ENCODE measurements at regions of chr17 and their contacts with region 1.

Region 1: DNA sequence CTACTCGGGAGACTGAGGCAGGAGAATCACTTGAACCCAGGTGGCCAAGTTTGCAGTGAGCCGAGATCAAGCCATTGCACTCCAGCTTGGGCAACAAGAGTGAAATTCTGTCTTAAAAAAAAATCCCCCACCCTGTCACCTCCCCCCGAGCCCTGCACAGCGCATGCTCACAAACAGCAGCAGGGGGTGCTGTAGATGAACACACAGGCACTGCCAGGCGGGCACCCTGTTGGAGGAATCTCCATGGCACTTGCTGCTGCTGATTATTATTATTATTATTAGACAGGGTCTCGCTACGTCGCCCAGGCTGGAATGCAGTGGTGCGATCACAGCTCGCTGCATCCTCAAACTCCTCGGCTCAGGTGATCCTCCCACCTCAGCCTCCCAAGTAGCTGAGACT is 24.6 kb downstream of the FZD2 start:
- DNase-seq: peak; percentile 68
- ATAC-seq: peak; percentile 64 to 85; a peak in 5 of 6 replicates
- H3K4me3 ChIP-seq: no peak overlapping the region
- H3K27ac ChIP-seq: peak overlapping the region in 1 of 2 experiments; percentile 59; a peak in 2 of 6 replicates
- H3K4me1 ChIP-seq: peaks cover 23% of the 10 kb centered on the region
- CTCF ChIP-seq: peak; percentile 44
- EP300 ChIP-seq: no peak
- POLR2A ChIP-seq: no peak
- RAD21 ChIP-seq: peak; percentile 59 to 73

Region 2: DNA sequence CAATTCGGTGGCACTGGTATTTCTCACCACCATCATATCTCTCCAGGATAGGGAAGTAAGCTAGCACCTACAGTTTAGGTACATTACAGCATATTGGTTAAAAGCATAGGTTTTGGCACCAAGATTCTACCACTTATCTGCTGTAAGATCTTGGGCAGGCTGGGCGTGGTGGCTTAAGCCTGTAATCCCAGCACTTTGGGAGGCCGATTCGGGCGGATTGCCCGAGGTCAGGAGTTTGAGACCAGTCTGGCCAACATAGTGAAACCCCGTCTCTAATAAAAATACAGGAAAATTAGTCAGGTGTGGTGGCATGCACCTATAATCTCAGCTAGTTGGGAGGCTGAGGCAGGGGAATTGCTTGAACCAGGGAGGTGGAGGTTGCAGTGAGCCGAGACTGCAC is 130.0 kb before region 1 on chr17:
- CTCF ChIA-PET with region 1: no interaction called
- POLR2A ChIA-PET with region 1: no interaction called
- DNase-seq: no peak
- ATAC-seq: no peak
- H3K4me3 ChIP-seq: no peak overlapping the region
- H3K27ac ChIP-seq: no peak overlapping the region
- H3K4me1 ChIP-seq: no peaks in the 10 kb centered on the region
- CTCF ChIP-seq: no peak
- EP300 ChIP-seq: no peak
- POLR2A ChIP-seq: no peak
- RAD21 ChIP-seq: no peak

Region 3: DNA sequence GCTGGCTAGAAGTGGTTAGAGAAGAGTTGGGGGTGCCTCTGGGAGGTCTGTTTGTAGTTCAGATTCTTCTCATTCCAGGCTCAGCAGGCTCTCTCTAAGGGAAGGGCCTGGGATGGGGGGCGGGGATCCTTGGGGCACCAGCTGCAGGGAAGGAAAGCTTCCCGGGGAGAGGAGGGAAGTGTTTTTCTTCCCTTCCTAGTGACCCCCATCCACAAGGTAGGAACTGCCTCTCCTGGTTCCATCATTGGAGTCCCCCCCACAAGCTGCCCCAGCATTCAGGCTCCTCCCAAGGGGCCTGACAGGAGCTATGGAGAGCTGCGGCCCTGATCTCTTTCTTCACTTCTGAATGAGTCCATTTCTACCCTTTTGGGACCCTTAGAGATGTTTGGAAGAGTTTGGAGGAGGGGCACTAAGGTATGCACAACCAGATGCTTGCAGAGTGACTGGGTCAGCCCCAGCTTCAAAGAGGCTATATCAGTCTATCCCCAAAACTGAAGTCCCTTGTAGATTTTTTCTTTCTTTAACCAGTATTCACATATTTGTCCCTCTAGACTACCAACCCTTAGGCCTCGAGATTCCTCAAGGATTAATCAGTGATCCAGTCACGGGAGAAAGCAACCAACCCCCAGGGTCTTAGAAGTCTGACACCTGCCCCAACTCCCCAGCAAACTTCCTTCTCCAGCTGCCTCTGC is 38.5 kb before region 1 on chr17:
- CTCF ChIA-PET with region 1: interaction called, 14 read pairs
- POLR2A ChIA-PET with region 1: interaction called, 20 read pairs
- DNase-seq: peak; percentile 94 to 98
- ATAC-seq: peak; percentile 80 to 91
- H3K4me3 ChIP-seq: no peak overlapping the region
- H3K27ac ChIP-seq: peak overlapping the region; percentile 93 to 94
- H3K4me1 ChIP-seq: peaks cover 66% of the 10 kb centered on the region
- CTCF ChIP-seq: no peak
- EP300 ChIP-seq: peak; percentile 51 to 81; a peak in 4 of 5 replicates
- POLR2A ChIP-seq: no peak
- RAD21 ChIP-seq: peak; percentile 46 to 47; a peak in 4 of 5 replicates

Region 4: GRCh38 chr17:44565866-44566443 is 15.9 kb before region 1 on chr17:
- CTCF ChIA-PET with region 1: interaction called, 25 read pairs
- POLR2A ChIA-PET with region 1: no interaction called
- DNase-seq: no peak
- ATAC-seq: no peak
- H3K4me3 ChIP-seq: no peak overlapping the region
- H3K27ac ChIP-seq: peak overlapping the region in 1 of 2 experiments; percentile 29; a peak in 1 of 6 replicates
- H3K4me1 ChIP-seq: peaks cover 14% of the 10 kb centered on the region
- CTCF ChIP-seq: peak; percentile 43
- EP300 ChIP-seq: no peak
- POLR2A ChIP-seq: no peak
- RAD21 ChIP-seq: peak in 1 of 2 experiments; percentile 55; a peak in 3 of 5 replicates

Region 5: GRCh38 chr17:44599298-44600175 is 17.7 kb after region 1 on chr17:
- CTCF ChIA-PET with region 1: interaction called, 16 read pairs
- POLR2A ChIA-PET with region 1: interaction called, 10 read pairs
- DNase-seq: peak; percentile 87 to 93
- ATAC-seq: peak; percentile 90 to 95
- H3K4me3 ChIP-seq: no peak overlapping the region
- H3K27ac ChIP-seq: peak overlapping the region; percentile 86 to 88
- H3K4me1 ChIP-seq: peaks cover 50% of the 10 kb centered on the region
- CTCF ChIP-seq: no peak
- EP300 ChIP-seq: no peak
- POLR2A ChIP-seq: no peak
- RAD21 ChIP-seq: peak; percentile 14 to 32; a peak in 4 of 5 replicates

Region 6: GRCh38 chr17:44628243-44629188 is 46.6 kb after region 1 on chr17:
- CTCF ChIA-PET with region 1: interaction called, 52 read pairs
- POLR2A ChIA-PET with region 1: no interaction called
- DNase-seq: no peak
- ATAC-seq: no peak
- H3K4me3 ChIP-seq: no peak overlapping the region
- H3K27ac ChIP-seq: peak overlapping the region in 1 of 2 experiments; percentile 52; a peak in 3 of 6 replicates
- H3K4me1 ChIP-seq: no peaks in the 10 kb centered on the region
- CTCF ChIP-seq: no peak
- EP300 ChIP-seq: no peak
- POLR2A ChIP-seq: no peak
- RAD21 ChIP-seq: no peak

Region 7: GRCh38 chr17:44636562-44636961 is 54.7 kb after region 1 on chr17:
- CTCF ChIA-PET with region 1: interaction called, 52 read pairs
- POLR2A ChIA-PET with region 1: no interaction called
- DNase-seq: peak; percentile 67 to 69
- ATAC-seq: peak; percentile 88 to 94
- H3K4me3 ChIP-seq: no peak overlapping the region
- H3K27ac ChIP-seq: peak overlapping the region in 1 of 2 experiments; percentile 1; a peak in 1 of 6 replicates
- H3K4me1 ChIP-seq: peaks cover 22% of the 10 kb centered on the region
- CTCF ChIP-seq: peak; percentile 97
- EP300 ChIP-seq: no peak
- POLR2A ChIP-seq: no peak
- RAD21 ChIP-seq: peak; percentile 99

Measured in A549 (cell line).